HCT116 (cell line): ENCODE measurements at regions of chr9 and their contacts with region 1.

Region 1: GRCh38 chr9:73269430-73270101 is 117.9 kb downstream of the ANXA1 start:
- DNase-seq: peak; percentile 6
- ATAC-seq: peak; percentile 59
- H3K4me3 ChIP-seq: no peak overlapping the region
- H3K27ac ChIP-seq: no peak overlapping the region
- H3K4me1 ChIP-seq: 0 out of 4 replicates have a peak, but pooled peaks cover 0 to 5% of the 10 kb centered on the region in 2 experiments
- H3K27me3 ChIP-seq: 0 out of 2 replicates have a peak, but pooled peaks cover 9% of the 10 kb centered on the region
- CTCF ChIP-seq: peak; percentile 30 to 58 (median 33); a peak in 4 of 6 replicates
- POLR2A ChIP-seq: no peak
- RAD21 ChIP-seq: peak; percentile 57

Region 2: GRCh38 chr9:72952914-72953313 is 316.7 kb before region 1 on chr9 and contains the start of gene ALDH1A1:
- CTCF ChIA-PET with region 1: no interaction called
- POLR2A ChIA-PET with region 1: no interaction called
- RAD21 ChIA-PET with region 1: no interaction called
- intact Hi-C with region 1: no loop called
- DNase-seq: no peak
- ATAC-seq: no peak
- H3K4me3 ChIP-seq: no peak within 1 kb of the TSS
- H3K27ac ChIP-seq: no peak within 1 kb of the TSS
- H3K4me1 ChIP-seq: no peaks in the 10 kb centered on the region
- H3K27me3 ChIP-seq: peaks cover 25% of the 10 kb centered on the region
- CTCF ChIP-seq: no peak
- POLR2A ChIP-seq: no peak
- RAD21 ChIP-seq: no peak
- total RNA-seq, gene ALDH1A1: 0.44 TPM

Region 3: DNA sequence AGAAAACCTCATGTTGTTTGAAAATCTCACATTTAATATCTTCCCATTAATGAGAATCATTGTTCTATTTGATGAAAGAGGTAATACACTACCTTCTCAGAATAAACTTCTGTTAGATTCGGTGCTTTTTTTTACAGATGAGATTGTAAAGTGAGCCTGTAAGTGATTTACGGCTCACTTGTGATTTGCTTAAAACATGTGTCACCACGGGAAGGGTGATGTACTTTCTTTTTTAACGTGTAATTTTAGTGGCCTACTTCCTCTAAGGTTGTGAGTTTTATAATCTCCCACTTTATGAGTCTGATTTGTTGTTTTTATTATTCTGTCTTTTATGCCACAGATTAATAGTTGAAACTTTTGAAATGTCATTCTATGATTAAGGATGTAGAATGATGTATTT is 102.0 kb before region 1 on chr9:
- CTCF ChIA-PET with region 1: no interaction called
- POLR2A ChIA-PET with region 1: no interaction called
- RAD21 ChIA-PET with region 1: no interaction called
- intact Hi-C with region 1: no loop called
- DNase-seq: no peak
- ATAC-seq: no peak
- H3K4me3 ChIP-seq: no peak overlapping the region
- H3K27ac ChIP-seq: no peak overlapping the region
- H3K4me1 ChIP-seq: peaks cover 0 to 1% of the 10 kb centered on the region in 2 experiments; a peak in 1 of 4 replicates
- H3K27me3 ChIP-seq: no peaks in the 10 kb centered on the region
- CTCF ChIP-seq: no peak
- POLR2A ChIP-seq: no peak
- RAD21 ChIP-seq: no peak

Region 4: DNA sequence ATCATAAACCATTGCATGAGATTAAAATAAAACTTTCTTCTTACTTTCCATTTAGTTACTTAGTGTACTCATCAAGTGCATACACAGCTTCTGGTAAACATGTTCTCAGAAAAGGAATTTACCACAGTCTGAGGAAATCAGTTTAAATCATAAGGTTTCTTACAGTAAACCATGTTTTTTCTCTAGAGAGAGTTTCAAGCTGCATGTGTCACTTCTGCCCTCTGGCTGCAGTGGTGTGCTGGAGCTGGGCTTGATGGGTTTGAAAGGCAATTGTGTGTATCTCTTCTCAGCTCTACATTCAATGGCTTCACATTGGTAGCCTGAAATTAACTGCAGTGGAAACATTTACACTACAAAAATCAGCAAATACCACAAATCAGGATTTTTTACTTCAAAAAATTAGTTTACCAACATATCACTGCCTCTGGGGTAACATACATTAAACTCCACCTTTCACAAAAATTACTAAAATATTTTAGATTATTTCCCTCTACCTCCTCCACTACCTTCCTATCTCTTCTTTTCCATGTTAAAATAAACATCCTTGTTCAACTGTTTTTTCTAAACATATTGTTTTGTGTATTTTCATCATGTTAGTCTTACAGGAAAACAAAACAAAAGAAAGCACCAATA is 296.4 kb after region 1 on chr9:
- CTCF ChIA-PET with region 1: interaction called, 23 read pairs
- POLR2A ChIA-PET with region 1: no interaction called
- RAD21 ChIA-PET with region 1: no interaction called
- intact Hi-C with region 1: no loop called
- DNase-seq: no peak
- ATAC-seq: no peak
- H3K4me3 ChIP-seq: no peak overlapping the region
- H3K27ac ChIP-seq: no peak overlapping the region
- H3K4me1 ChIP-seq: no peaks in the 10 kb centered on the region
- H3K27me3 ChIP-seq: no peaks in the 10 kb centered on the region
- CTCF ChIP-seq: peak; percentile 24 to 52 (median 50); a peak in 5 of 6 replicates
- POLR2A ChIP-seq: no peak
- RAD21 ChIP-seq: peak; percentile 48; the same call in 1 of the 2 replicates